ENCODE measurements at regions of chr2 and their contacts with region 1.

Region 1: GRCh38 chr2:231000211-231000904 is 4.4 kb downstream of the SPATA3 start:
- DNase-seq: no peak
- H3K4me3 ChIP-seq: no peak overlapping the region
- H3K27ac ChIP-seq: no peak overlapping the region
- H3K4me1 ChIP-seq: no peaks in the 10 kb centered on the region
- H3K27me3 ChIP-seq: no peaks in the 10 kb centered on the region
- CTCF ChIP-seq: peak in 1 of 2 donors; percentile 12

Region 2: GRCh38 chr2:230552181-230552580 is 448.2 kb before region 1 on chr2:
- CTCF ChIA-PET with region 1: no interaction called
- dilution Hi-C with region 1: no loop called
- in situ Hi-C with region 1: no loop called
- intact Hi-C with region 1: no loop called
- DNase-seq: no peak
- H3K4me3 ChIP-seq: no peak overlapping the region
- H3K27ac ChIP-seq: no peak overlapping the region
- H3K4me1 ChIP-seq: no peaks in the 10 kb centered on the region
- H3K27me3 ChIP-seq: no peaks in the 10 kb centered on the region
- CTCF ChIP-seq: no peak

Region 3: GRCh38 chr2:230627806-230628724 is 372.3 kb before region 1 on chr2:
- CTCF ChIA-PET with region 1: no interaction called
- dilution Hi-C with region 1: no loop called
- in situ Hi-C with region 1: no loop called
- intact Hi-C with region 1: no loop called
- DNase-seq: no peak
- H3K4me3 ChIP-seq: no peak overlapping the region
- H3K27ac ChIP-seq: no peak overlapping the region
- H3K4me1 ChIP-seq: no peaks in the 10 kb centered on the region
- H3K27me3 ChIP-seq: no peaks in the 10 kb centered on the region
- CTCF ChIP-seq: no peak

Region 4: DNA sequence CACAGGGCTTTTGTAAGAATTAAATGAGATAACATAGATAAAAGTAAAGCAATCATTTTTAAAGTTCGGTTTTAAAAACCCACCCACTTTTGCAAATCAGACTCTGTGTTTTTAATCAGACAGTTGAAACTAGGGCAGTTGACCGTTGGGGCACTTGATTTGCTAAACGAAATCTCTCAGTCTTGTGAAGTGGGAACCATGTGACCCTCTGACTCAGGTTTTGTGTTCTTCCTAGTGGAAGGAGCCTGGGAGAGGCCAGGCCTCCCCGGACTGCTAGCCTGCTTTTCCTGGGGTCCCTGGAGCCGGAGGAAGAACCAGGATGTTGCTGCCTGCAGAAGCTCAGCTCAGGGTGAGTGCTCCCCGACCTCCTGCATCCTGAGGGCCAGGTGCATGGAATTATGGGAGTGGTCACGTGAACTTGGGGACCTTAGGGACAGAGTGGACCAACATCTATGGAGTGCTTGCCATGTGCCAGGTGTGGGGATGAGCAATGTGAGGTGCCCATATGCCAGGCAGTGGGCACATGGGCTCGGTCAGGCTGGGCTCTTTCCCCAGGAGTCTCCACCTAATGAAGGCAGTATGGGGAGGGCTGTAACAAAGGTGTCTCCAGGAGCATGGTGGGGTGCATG is 40.8 kb after region 1 on chr2:
- CTCF ChIA-PET with region 1: no interaction called
- dilution Hi-C with region 1: loop called (anchors 5 kb)
- in situ Hi-C with region 1: no loop called
- intact Hi-C with region 1: no loop called
- DNase-seq: no peak
- H3K4me3 ChIP-seq: no peak overlapping the region
- H3K27ac ChIP-seq: no peak overlapping the region
- H3K4me1 ChIP-seq: no peaks in the 10 kb centered on the region
- H3K27me3 ChIP-seq: peaks cover 11% of the 10 kb centered on the region
- CTCF ChIP-seq: no peak